ENCODE measurements at regions of chr5 and their contacts with region 1.

Region 1: DNA sequence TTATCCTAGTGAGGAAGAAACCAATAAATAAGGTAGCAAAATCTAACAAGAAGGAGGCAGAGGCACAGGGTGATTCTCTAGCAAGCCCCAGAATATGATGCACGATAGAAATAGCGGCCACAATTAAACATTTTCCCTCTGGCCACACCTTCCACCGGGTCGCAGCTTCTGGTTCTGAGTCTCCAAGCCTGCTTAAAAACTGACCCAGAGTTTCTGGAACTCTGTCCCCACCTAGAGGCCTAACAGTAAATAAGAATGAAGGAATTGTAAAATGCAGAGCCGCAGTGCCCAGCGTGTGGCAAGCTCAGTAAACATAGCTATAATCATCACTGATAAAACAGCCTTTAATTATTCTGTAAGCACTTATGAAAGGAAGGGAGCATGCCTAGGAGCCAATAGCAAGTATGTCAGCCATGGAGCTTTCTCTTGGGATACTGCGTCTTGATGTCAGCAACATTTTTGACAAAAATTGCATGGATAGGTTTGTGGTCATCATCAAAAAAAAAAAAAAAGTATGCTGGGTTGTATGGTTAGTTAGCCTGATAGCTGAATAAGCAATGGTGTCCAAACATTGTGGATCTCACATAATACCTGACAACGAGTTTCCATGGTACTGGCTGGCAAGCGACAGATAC is 465.5 kb downstream of the DNAH5 start:
- DNase-seq: peak; percentile 32
- ATAC-seq: peak; percentile 92
- H3K4me3 Mint-ChIP-seq: no peak overlapping the region
- H3K27ac Mint-ChIP-seq: no peak overlapping the region
- H3K4me1 Mint-ChIP-seq: peaks cover 44% of the 10 kb centered on the region
- H3K27me3 Mint-ChIP-seq: no peaks in the 10 kb centered on the region
- CTCF ChIP-seq: peak; percentile 46

Region 2: GRCh38 chr5:13244151-13244550 is 234.8 kb before region 1 on chr5:
- CTCF ChIA-PET with region 1: interaction called, 12 read pairs
- POLR2A ChIA-PET with region 1: no interaction called
- DNase-seq: no peak
- ATAC-seq: no peak
- H3K4me3 Mint-ChIP-seq: no peak overlapping the region
- H3K27ac Mint-ChIP-seq: no peak overlapping the region
- H3K4me1 Mint-ChIP-seq: peaks cover 16% of the 10 kb centered on the region
- H3K27me3 Mint-ChIP-seq: no peaks in the 10 kb centered on the region
- CTCF ChIP-seq: no peak

Region 3: GRCh38 chr5:13250450-13251291 is 228.3 kb before region 1 on chr5:
- CTCF ChIA-PET with region 1: interaction called, 16 read pairs
- POLR2A ChIA-PET with region 1: no interaction called
- DNase-seq: no peak
- ATAC-seq: peak; percentile 61
- H3K4me3 Mint-ChIP-seq: no peak overlapping the region
- H3K27ac Mint-ChIP-seq: no peak overlapping the region
- H3K4me1 Mint-ChIP-seq: peaks cover 19% of the 10 kb centered on the region
- H3K27me3 Mint-ChIP-seq: no peaks in the 10 kb centered on the region
- CTCF ChIP-seq: peak; percentile 61

Region 4: DNA sequence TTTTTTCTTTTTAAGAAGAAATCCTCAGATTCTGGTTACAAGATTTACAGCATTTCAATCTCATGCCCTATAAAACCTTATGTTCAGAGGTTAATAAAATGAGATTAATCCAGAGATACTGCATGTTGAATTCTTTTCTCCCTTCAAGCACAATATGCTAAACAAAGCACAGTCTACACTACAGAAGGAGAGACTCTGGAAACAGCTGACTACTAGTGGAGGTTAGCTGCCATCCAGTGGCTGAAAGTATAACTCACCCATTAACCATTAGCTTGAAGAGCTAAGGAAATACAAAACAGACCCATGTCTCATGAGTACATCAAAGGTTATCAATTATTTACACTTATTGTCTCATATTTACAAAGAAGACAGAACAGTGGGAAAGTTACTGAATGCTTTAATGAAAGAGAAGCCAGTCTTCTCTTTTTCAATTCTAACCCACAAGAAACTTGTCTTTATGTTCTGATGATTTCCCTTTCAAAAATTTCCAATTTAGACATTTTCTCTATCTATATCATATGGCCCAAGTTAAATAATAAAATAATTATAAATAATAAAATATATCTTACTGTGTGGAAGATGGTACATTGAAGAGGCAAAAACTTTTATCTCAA is 478.2 kb after region 1 on chr5:
- CTCF ChIA-PET with region 1: interaction called, 13 read pairs
- POLR2A ChIA-PET with region 1: no interaction called
- DNase-seq: peak; percentile 53
- ATAC-seq: peak; percentile 99
- H3K4me3 Mint-ChIP-seq: no peak overlapping the region
- H3K27ac Mint-ChIP-seq: no peak overlapping the region
- H3K4me1 Mint-ChIP-seq: peaks cover 2% of the 10 kb centered on the region
- H3K27me3 Mint-ChIP-seq: no peaks in the 10 kb centered on the region; the same call in 1 of the 2 replicates
- CTCF ChIP-seq: peak; percentile 58; the same call in 1 of the 2 replicates